Ascending aorta (tissue), 2 donors: ENCODE measurements at regions of chr3 and their contacts with region 1.

Region 1: DNA sequence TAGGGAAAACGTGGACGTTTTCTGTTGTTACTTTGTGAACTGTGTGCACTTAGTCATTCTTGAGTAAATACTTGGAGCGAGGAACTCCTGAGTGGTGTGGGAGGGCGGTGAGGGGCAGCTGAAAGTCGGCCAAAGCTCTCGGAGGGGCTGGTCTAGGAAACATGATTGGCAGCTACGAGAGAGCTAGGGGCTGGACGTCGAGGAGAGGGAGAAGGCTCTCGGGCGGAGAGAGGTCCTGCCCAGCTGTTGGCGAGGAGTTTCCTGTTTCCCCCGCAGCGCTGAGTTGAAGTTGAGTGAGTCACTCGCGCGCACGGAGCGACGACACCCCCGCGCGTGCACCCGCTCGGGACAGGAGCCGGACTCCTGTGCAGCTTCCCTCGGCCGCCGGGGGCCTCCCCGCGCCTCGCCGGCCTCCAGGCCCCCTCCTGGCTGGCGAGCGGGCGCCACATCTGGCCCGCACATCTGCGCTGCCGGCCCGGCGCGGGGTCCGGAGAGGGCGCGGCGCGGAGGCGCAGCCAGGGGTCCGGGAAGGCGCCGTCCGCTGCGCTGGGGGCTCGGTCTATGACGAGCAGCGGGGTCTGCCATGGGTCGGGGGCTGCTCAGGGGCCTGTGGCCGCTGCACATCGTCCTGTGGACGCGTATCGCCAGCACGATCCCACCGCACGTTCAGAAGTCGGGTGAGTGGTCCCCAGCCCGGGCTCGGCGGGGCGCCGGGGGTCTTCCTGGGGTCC is at the start of gene TGFBR2:
- DNase-seq: peak; percentile 85 to 97
- H3K4me3 ChIP-seq: peak within 1 kb of the TSS; percentile 90 to 93
- H3K27ac ChIP-seq: peak within 1 kb of the TSS; percentile 98
- H3K4me1 ChIP-seq: peaks cover 0 to 11% of the 10 kb centered on the region in 2 donors
- H3K27me3 ChIP-seq: no peaks in the 10 kb centered on the region
- CTCF ChIP-seq: peak in 1 of 3 experiments; percentile 41
- total RNA-seq, gene TGFBR2: 343 TPM

Region 2: GRCh38 chr3:30342319-30343060 is 264.0 kb before region 1 on chr3:
- intact Hi-C with region 1: loop called (anchors 5 kb)
- DNase-seq: peak; percentile 20 to 79
- H3K4me3 ChIP-seq: no peak overlapping the region
- H3K27ac ChIP-seq: peak overlapping the region; percentile 68 to 70
- H3K4me1 ChIP-seq: peaks cover 0 to 18% of the 10 kb centered on the region in 2 donors
- H3K27me3 ChIP-seq: no peaks in the 10 kb centered on the region
- CTCF ChIP-seq: no peak

Region 3: GRCh38 chr3:30496066-30496966 is 110.2 kb before region 1 on chr3:
- intact Hi-C with region 1: loop called (anchors 5 kb)
- DNase-seq: peak in 1 of 2 donors; percentile 88
- H3K4me3 ChIP-seq: peak overlapping the region in 1 of 2 donors; percentile 0
- H3K27ac ChIP-seq: peak overlapping the region; percentile 85 to 92
- H3K4me1 ChIP-seq: peaks cover 32 to 72% of the 10 kb centered on the region in 2 donors
- H3K27me3 ChIP-seq: no peaks in the 10 kb centered on the region
- CTCF ChIP-seq: no peak

Region 4: DNA sequence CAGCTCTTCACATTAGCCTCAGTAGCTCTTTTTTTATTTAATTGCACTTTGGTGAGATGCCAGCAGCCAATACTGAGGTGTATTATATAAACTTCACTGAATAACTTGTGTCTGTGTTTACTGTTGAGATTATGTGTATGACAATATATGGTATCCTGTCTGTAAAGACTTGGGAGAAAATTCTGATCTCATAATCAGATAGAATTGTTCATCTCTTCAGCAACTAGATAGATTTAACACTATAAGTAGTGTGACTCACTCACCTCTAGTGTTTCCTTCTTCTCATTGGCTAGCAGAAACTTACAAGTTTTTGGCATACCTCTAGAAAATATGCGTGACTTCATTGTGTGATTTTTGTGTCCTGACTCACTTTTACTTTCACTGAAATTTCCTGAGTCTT is 67.7 kb before region 1 on chr3:
- intact Hi-C with region 1: loop called (anchors 5 kb)
- DNase-seq: no peak
- H3K4me3 ChIP-seq: no peak overlapping the region
- H3K27ac ChIP-seq: no peak overlapping the region
- H3K4me1 ChIP-seq: peaks cover 0 to 13% of the 10 kb centered on the region in 2 donors
- H3K27me3 ChIP-seq: no peaks in the 10 kb centered on the region
- CTCF ChIP-seq: no peak

Region 5: DNA sequence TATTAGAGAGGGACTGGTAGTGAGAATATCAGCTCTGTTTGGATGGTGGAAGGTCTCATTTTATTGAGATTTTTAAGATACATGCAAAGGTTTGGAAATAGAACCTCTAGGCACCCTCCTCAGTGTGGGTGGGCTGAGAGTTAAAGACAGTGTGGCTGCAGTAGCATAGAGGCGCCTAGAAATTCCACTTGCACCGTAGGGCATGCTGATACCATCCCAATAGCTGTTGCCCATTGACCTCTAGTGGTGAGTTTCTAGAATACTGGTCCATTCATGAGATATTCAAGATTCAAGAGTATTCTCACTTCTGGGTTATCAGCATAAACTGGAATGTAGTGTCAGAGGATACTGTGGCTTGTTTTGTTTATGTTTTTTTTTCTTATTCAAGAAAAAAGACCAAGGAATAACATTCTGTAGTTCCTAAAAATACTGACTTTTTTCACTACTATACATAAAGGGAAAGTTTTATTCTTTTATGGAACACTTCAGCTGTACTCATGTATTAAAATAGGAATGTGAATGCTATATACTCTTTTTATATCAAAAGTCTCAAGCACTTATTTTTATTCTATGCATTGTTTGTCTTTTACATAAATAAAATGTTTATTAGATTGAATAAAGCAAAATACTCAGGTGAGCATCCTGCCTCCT is 87.1 kb after region 1 on chr3:
- intact Hi-C with region 1: loop called (anchors 5 kb)
- DNase-seq: no peak
- H3K4me3 ChIP-seq: no peak overlapping the region
- H3K27ac ChIP-seq: peak overlapping the region in 1 of 2 donors; percentile 31
- H3K4me1 ChIP-seq: peaks cover 9 to 35% of the 10 kb centered on the region in 2 donors
- H3K27me3 ChIP-seq: no peaks in the 10 kb centered on the region
- CTCF ChIP-seq: peak; percentile 80 to 82 (median 81)

Region 6: DNA sequence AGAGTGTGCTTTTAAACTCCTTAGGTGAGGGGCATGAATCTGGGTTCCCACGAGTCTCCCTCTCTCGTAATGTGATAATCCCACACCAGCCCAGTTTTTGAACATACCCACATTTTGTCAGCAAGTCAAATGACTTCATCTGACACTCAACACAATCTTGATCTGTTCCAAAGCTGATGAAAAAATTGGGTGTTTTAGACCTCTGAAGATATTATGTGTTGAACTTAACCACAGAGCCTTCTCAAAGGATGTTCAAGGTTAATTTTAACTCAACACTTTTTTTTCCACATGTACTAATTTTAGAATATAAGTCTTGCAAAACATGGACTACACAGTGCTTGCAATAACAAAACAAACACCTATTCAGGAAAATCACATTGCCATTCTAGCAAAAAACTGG is 123.0 kb after region 1 on chr3:
- intact Hi-C with region 1: no loop called
- DNase-seq: no peak
- H3K4me3 ChIP-seq: no peak overlapping the region
- H3K27ac ChIP-seq: no peak overlapping the region
- H3K4me1 ChIP-seq: peaks cover 0 to 3% of the 10 kb centered on the region in 2 donors
- H3K27me3 ChIP-seq: no peaks in the 10 kb centered on the region
- CTCF ChIP-seq: no peak